ENCODE measurements at regions of chr2 and their contacts with region 1.

Region 1: DNA sequence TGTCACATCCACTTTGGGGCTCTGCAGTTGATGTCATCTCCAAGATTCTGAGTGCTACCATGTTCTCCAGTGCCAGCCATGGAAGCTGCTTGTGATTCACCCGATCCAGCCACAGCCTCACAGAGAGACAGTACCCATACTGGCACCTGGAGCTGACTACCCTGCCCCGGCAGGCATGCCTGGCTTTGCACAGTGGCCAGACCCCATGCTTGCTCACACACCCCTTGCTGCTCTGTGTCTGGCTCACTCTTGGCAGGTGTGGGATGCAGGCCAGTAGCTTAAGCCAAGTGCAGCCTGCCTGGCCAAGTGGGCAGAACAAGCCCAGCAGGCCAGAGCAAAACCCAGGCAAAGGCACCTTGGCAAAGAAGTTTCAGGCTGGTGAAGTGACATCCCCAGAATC is 828.4 kb upstream of the VRK2 start:
- DNase-seq: peak; percentile 53 to 61
- ATAC-seq: peak; percentile 75 to 99 (median 92)
- H3K4me3 ChIP-seq: no peak overlapping the region
- H3K27ac ChIP-seq: peak overlapping the region in 1 of 10 donors; percentile 2
- H3K4me1 ChIP-seq: no peaks in the 10 kb centered on the region
- H3K27me3 ChIP-seq: no peaks in the 10 kb centered on the region
- CTCF ChIP-seq: no peak

Region 2: DNA sequence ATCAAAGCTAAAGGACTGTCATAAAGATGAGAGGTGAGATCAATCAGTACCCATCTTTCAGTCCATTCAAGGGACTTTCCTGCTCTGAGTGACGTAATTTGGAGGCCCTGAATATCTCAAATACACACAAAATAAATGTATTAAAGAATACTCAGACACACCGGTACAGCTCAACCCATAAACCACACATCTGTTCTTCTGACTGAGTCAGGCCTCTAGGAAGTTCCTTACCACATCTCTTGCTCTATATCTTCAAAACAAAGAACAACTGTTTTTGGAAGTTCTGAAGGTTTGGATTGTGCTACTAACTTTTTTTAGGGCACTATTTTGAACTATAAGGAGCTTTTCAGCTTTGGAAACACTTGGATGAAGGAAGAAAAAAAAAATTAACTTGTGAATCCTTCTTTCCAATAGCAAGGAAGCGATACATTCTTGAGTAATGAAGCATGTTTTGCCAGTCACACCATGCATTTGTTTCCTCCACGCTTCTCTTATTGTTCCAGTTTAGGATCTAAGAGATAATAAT is 38.1 kb before region 1 on chr2:
- intact Hi-C with region 1: loop called in 1 of 10 experiments (anchors 5 kb)
- DNase-seq: no peak
- ATAC-seq: no peak
- H3K4me3 ChIP-seq: no peak overlapping the region
- H3K27ac ChIP-seq: no peak overlapping the region
- H3K4me1 ChIP-seq: no peaks in the 10 kb centered on the region
- H3K27me3 ChIP-seq: no peaks in the 10 kb centered on the region
- CTCF ChIP-seq: no peak

Region 3: GRCh38 chr2:57343391-57344006 is 125.3 kb after region 1 on chr2:
- intact Hi-C with region 1: no loop called
- DNase-seq: no peak
- ATAC-seq: no peak
- H3K4me3 ChIP-seq: no peak overlapping the region
- H3K27ac ChIP-seq: no peak overlapping the region
- H3K4me1 ChIP-seq: no peaks in the 10 kb centered on the region
- H3K27me3 ChIP-seq: no peaks in the 10 kb centered on the region
- CTCF ChIP-seq: no peak